ENCODE measurements at regions of chr6 and their contacts with region 1.

Region 1: DNA sequence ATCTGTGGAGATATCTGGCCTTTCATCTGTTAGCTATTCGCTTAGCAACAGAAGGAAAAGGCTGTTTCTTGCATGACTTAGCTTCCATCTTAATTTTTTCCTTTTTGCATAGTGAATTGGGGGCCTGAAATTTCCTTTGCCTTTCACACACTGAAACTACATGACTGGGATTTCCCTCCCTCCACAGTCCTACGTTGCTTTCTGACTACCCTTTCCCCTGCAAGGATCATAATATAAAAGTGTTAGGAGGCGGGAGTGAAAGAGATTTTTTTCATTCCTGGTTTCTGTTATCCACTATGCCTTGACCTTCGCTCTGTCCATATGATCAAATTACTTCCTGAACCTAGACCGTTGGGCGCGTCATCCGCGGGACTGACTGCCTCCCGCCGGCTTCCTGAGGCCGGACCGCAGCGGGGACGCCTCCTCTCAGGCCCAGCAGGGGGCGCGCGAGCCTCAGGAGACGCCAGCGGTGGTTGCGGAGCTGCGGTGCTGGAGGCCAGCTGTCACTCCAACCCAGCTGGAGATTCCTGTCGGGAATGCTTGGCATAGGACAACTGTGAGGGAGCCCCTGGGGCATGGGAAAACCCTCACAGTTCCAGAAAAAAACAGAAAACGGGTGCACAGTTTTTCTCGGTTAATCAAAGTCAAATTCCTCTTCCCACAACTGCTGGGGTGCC is 55.6 kb downstream of the MEP1A start:
- DNase-seq: peak; percentile 56 to 79 (median 72)
- H3K4me3 ChIP-seq: peak overlapping the region in 1 of 3 experiments; percentile 52
- H3K4me3 Mint-ChIP-seq: peak overlapping the region; percentile 60 to 87
- H3K27ac ChIP-seq: no peak overlapping the region
- H3K27ac Mint-ChIP-seq: peak overlapping the region in 2 of 7 donors; percentile 17 to 71
- H3K4me1 ChIP-seq: peaks cover 5 to 7% of the 10 kb centered on the region in 2 donors
- H3K4me1 Mint-ChIP-seq: peaks cover 12% of the 10 kb centered on the region
- H3K27me3 ChIP-seq: no peaks in the 10 kb centered on the region
- H3K27me3 Mint-ChIP-seq: peaks cover 0 to 6% (median 1%) of the 10 kb centered on the region in 3 donors
- CTCF ChIP-seq: peak; percentile 95

Region 2: DNA sequence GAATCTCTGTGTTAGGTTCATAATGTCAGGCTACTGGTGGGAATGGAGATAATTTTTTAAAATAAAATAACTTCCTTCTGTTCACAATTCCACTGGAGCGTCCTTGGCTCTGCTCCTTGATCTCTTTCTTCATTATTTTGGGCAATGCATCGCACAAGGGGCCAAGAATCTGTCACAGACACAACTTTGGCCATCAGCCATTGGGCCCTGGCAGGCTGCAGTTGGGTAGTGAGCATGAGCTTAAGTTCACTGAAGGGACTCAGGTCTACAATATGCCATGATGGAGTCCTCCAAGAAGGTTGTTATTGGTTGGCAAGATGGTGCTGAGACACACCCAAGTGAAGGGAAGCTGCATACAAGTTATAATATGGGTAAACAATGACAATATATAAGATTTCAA is 236.2 kb before region 1 on chr6:
- intact Hi-C with region 1: no loop called
- DNase-seq: no peak
- H3K4me3 ChIP-seq: no peak overlapping the region
- H3K4me3 Mint-ChIP-seq: no peak overlapping the region
- H3K27ac ChIP-seq: no peak overlapping the region
- H3K27ac Mint-ChIP-seq: no peak overlapping the region
- H3K4me1 ChIP-seq: no peaks in the 10 kb centered on the region
- H3K4me1 Mint-ChIP-seq: no peaks in the 10 kb centered on the region
- H3K27me3 ChIP-seq: no peaks in the 10 kb centered on the region
- H3K27me3 Mint-ChIP-seq: peaks cover 0 to 2% (median 0%) of the 10 kb centered on the region in 3 donors
- CTCF ChIP-seq: no peak

Region 3: DNA sequence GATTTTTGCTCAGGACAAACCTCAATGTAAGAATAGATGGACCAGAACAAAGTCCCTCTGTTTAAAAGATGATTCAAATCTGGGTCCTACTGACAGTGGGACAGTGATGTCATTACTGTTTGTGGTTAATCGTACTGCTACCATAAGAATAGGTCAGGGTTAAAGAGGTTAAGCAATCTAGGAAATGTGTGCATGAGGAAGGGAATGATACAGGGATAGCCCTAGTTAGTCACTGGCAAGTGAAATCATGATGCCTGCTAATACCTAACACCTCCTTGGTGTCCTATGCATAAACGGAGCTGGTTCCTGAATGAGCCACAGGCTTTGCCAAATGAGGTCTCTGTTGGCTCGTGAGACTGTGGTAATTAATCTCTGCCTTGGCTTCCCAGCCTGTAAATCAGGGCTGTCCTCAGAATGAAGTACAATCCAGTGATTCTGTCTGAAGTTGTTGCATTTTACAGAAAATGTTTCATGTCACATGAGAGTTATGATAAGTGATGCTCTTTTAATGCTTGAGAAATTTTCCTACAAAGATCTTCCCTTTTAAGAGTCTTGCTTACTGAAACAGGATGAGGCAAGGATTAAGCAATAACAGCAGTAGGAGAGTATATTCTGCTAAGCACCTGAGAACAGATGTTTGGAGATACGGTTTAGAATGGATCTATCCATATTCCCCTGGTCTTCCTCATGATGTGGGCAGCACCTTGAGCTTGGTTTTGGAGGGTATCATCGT is 51.8 kb before region 1 on chr6:
- intact Hi-C with region 1: no loop called
- DNase-seq: peak in 1 of 3 donors; percentile 64
- H3K4me3 ChIP-seq: no peak overlapping the region
- H3K4me3 Mint-ChIP-seq: no peak overlapping the region
- H3K27ac ChIP-seq: no peak overlapping the region
- H3K27ac Mint-ChIP-seq: no peak overlapping the region
- H3K4me1 ChIP-seq: no peaks in the 10 kb centered on the region
- H3K4me1 Mint-ChIP-seq: peaks cover 6% of the 10 kb centered on the region
- H3K27me3 ChIP-seq: no peaks in the 10 kb centered on the region
- H3K27me3 Mint-ChIP-seq: peaks cover 0 to 1% (median 1%) of the 10 kb centered on the region in 3 donors
- CTCF ChIP-seq: no peak

Region 4: GRCh38 chr6:47047479-47048407 is 198.9 kb after region 1 on chr6:
- intact Hi-C with region 1: loop called in 1 of 2 experiments (anchors 5 kb)
- DNase-seq: peak; percentile 19 to 65 (median 58)
- H3K4me3 ChIP-seq: no peak overlapping the region
- H3K4me3 Mint-ChIP-seq: peak overlapping the region in 1 of 2 donors; percentile 55
- H3K27ac ChIP-seq: no peak overlapping the region
- H3K27ac Mint-ChIP-seq: no peak overlapping the region
- H3K4me1 ChIP-seq: no peaks in the 10 kb centered on the region
- H3K4me1 Mint-ChIP-seq: peaks cover 13% of the 10 kb centered on the region
- H3K27me3 ChIP-seq: no peaks in the 10 kb centered on the region
- H3K27me3 Mint-ChIP-seq: peaks cover 0 to 2% (median 0%) of the 10 kb centered on the region in 3 donors
- CTCF ChIP-seq: peak; percentile 62